Naive thymus-derived CD8-positive, alpha-beta T cell (primary cell): ENCODE measurements at regions of chr9 and their contacts with region 1.

Region 1: DNA sequence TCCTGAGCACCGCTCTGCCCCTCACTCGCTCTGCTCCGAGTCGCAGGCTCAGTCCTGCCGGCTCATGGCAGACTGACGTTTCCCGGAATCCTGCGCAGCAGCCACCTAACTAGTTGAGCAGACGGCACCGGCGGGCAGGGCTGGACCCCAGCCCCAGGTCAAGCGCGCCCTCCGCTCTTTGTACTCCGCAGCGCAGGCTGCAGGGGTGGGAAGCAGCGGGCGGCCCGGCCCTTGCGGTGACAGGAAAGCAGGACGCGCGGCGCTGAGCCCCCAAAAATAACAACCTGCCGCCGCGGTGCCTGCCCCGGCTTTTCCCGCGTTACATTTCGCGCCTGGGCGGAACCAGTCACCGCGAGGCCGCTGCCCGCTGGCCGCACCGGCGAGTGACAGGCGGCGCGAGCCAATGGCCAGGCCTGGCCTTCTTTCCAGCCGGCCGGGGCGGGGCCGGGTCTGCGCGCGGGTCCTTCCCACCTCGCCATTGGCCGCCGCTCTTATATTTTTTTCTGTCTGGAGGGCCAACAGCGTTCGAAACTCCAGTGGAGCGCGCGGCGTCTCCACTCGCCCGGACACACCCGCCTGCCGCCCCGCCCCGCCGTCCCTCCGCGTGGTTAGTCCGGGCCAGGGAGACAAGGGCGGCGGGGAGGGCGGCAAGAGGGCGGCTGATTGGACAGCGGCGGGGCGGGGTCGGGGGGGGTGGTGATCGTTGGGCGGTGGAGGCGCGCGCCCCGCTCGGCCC is at the start of gene ZNF367:
- DNase-seq: peak; percentile 80 to 95 (median 84)
- ATAC-seq: peak; percentile 67 to 71
- H3K4me3 Mint-ChIP-seq: peak within 1 kb of the TSS; percentile 86 to 95 (median 92)
- H3K27ac Mint-ChIP-seq: peak within 1 kb of the TSS; percentile 85 to 98 (median 96)
- H3K4me1 Mint-ChIP-seq: peaks cover 8 to 43% (median 37%) of the 10 kb centered on the region in 4 donors
- H3K27me3 Mint-ChIP-seq: peaks cover 0 to 2% (median 0%) of the 10 kb centered on the region in 5 donors
- polyA plus RNA-seq, gene ZNF367: 0.82 to 2.2 (median 0.97) TPM

Region 2: DNA sequence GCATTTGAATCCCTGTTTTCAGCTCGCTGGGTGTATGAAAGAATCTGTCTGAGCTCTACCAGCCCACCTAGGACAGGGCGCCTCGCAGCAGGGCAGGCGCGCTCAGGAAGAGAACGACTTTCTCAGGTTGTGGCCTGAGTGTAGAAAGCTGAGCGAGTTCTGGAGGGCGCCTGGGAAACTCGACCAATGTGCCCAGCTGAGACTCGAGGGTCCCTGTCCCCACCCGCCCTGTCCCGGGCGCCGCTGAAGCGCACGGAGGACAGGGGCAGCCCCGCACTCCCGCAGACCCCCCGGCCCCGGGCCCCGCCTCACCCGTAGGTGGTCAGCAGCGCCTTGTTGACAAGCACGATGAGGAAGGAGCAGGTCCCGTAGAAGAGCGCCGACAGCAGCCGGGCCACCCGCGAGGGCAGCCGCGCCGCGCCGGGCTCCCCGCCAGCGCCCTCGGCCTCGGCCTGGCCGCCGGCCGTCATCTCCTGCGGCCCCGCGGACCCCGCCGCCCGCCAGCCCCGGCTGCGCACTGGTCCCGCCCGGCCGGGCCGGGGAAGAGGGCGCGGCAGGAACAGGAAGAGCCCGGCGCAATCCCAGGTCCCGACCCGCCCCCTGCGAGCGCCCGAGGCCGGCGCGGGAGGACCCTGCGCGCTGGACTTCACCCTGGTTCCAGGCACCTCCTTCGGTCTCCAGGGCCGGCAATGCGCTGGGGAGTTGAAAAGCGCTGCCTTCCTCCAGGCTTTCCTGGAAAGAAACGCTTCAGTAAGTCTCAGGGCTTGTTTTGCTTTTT is 34.9 kb before region 1 on chr9 and contains the start of gene SLC35D2:
- POLR2A ChIA-PET with region 1: interaction called, 15 read pairs
- DNase-seq: peak in 6 of 10 donors; percentile 14 to 34 (median 20)
- ATAC-seq: peak; percentile 77 to 81
- H3K4me3 Mint-ChIP-seq: peak within 1 kb of the TSS; percentile 78 to 94 (median 88)
- H3K27ac Mint-ChIP-seq: peak within 1 kb of the TSS; percentile 53 to 92 (median 88)
- H3K4me1 Mint-ChIP-seq: peaks cover 17 to 41% (median 33%) of the 10 kb centered on the region in 4 donors
- H3K27me3 Mint-ChIP-seq: no peaks in the 10 kb centered on the region
- polyA plus RNA-seq, gene SLC35D2: 17.0 to 21.5 (median 20.0) TPM

Region 3: GRCh38 chr9:96449845-96450612 is 31.8 kb after region 1 on chr9 and contains the start of gene HABP4:
- POLR2A ChIA-PET with region 1: interaction called, 36 read pairs
- DNase-seq: peak; percentile 92 to 99 (median 95)
- ATAC-seq: peak; percentile 89 to 95
- H3K4me3 Mint-ChIP-seq: peak within 1 kb of the TSS; percentile 87 to 98 (median 95)
- H3K27ac Mint-ChIP-seq: peak within 1 kb of the TSS; percentile 74 to 97 (median 92)
- H3K4me1 Mint-ChIP-seq: peaks cover 9 to 29% (median 25%) of the 10 kb centered on the region in 4 donors
- H3K27me3 Mint-ChIP-seq: peaks cover 0 to 8% (median 3%) of the 10 kb centered on the region in 5 donors
- polyA plus RNA-seq, gene HABP4: 13.5 to 31.8 (median 14.3) TPM

Region 4: DNA sequence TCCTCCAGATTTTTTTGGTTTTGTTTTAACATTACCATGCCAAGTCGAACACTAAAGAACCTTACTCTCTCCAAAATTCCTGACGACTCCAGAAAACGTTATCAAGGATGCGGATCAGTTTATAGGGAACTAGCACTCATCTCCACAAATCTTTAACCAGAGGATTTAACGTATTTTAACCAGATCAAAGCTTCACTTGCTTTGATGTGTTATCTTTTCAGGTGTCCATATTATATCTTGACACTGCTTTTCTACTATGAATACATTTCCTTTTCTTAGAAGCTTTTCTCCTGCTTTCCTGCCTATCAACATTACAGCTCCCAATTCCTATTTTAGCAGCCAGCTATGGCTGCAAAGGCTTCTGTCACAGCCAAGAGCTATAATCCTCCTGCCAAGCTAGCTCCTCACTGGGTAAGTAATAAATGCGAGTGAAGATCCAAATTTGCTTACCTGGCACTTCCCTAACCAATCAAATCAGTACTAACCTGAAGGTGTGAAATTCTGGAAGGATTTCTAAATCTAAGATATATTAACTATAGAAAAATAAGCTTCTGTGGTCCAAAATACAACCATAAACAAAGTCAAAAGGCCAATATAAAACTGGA is 141.2 kb after region 1 on chr9:
- POLR2A ChIA-PET with region 1: no interaction called
- DNase-seq: no peak
- ATAC-seq: no peak
- H3K4me3 Mint-ChIP-seq: no peak overlapping the region
- H3K27ac Mint-ChIP-seq: no peak overlapping the region
- H3K4me1 Mint-ChIP-seq: peaks cover 1 to 7% (median 4%) of the 10 kb centered on the region in 4 donors
- H3K27me3 Mint-ChIP-seq: peaks cover 0 to 5% (median 0%) of the 10 kb centered on the region in 5 donors